Caco-2 (cell line): ENCODE measurements at regions of chr2 and their contacts with region 1.

Region 1: GRCh38 chr2:230738391-230738811 is 25.8 kb downstream of the CAB39 start:
- DNase-seq: no peak
- H3K4me3 ChIP-seq: peak overlapping the region; percentile 3; the same call in 1 of the 2 replicates
- H3K4me3 Mint-ChIP-seq: peak overlapping the region; percentile 57
- H3K27ac Mint-ChIP-seq: peak overlapping the region; percentile 36
- H3K4me1 ChIP-seq: peaks cover 50% of the 10 kb centered on the region
- H3K4me1 Mint-ChIP-seq: peaks cover 16% of the 10 kb centered on the region
- H3K27me3 ChIP-seq: no peaks in the 10 kb centered on the region
- H3K27me3 Mint-ChIP-seq: no peaks in the 10 kb centered on the region
- CTCF ChIP-seq: no peak

Region 2: DNA sequence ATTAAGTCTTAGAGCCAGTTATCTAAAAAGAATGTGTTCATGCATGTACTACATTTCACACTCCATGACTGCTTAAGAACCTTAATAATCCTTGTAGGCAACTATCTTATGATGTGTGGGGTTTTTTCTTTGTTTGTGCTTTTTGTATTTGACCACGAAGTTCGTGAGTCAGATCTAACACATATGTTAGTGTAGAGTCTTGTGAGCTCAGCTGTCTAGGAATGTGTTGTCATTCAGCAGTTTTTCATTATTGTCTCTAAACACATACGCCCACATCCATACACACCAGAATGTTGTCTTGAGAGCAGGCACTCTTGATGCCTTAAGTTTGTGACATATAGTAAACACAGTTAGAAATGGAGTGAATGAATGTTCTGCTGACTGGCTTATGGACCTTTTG is 12.7 kb after region 1 on chr2:
- CTCF ChIA-PET with region 1: no interaction called
- POLR2A ChIA-PET with region 1: no interaction called
- intact Hi-C with region 1: loop called (anchors 1 kb)
- DNase-seq: no peak
- H3K4me3 ChIP-seq: no peak overlapping the region
- H3K4me3 Mint-ChIP-seq: no peak overlapping the region
- H3K27ac Mint-ChIP-seq: no peak overlapping the region
- H3K4me1 ChIP-seq: peaks cover 8% of the 10 kb centered on the region
- H3K4me1 Mint-ChIP-seq: peaks cover 9% of the 10 kb centered on the region
- H3K27me3 ChIP-seq: no peaks in the 10 kb centered on the region
- H3K27me3 Mint-ChIP-seq: no peaks in the 10 kb centered on the region
- CTCF ChIP-seq: no peak